MCF 10A (cell line): ENCODE measurements at regions of chr7 and their contacts with region 1.

Region 1: DNA sequence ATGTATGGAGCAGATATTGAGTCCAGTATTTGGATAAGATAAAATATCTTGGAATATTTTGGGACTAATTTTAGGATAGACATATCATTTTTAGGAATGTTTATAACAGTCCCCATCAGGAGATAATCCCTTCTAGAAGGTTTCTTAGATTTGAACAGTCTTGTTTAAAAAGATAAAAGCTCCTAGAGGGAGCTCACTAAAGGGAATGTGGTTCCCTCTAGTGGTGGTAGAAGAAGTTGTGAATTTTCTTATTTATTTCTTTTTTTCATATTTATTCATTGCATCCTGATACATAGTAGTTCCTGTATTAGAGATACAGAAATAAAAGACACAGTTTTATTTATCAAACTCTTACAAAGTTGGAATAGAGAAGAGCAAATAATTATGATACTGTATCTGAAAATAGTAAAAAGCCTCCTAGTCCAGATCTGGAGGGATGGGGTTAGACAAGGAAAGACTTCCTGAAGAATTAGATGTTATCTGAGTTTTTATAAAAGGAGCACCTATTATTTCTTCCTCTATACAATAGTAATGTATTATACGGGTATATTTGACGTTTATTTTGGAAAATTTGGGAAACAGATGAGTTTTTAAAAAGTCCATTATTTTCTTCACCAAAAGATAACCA is 24.5 kb upstream of the KLF14 start:
- DNase-seq: peak; percentile 57
- H3K4me3 Mint-ChIP-seq: no peak overlapping the region
- H3K27ac Mint-ChIP-seq: no peak overlapping the region
- H3K4me1 Mint-ChIP-seq: peaks cover 5% of the 10 kb centered on the region
- H3K27me3 Mint-ChIP-seq: peaks cover 35% of the 10 kb centered on the region
- CTCF ChIP-seq: peak; percentile 64

Region 2: DNA sequence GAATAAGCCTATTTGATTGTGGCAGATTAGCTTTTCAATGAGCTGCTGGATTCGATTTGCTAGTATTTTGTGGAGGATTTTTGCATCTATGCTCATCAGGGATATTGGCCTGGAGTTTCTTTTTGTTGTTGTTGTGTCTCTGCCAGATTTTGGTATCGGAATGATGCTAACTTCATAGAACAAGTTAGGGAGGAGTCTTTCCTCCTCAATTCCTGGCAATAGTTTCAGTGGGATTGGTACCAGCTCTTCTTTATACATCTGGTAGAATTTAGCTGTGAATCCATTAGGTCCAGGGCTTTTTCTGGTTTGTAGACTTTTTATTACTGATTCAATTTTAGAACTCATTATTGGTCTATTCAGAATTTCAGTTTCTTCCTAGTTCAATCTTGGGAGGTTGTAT is 18.9 kb after region 1 on chr7:
- CTCF ChIA-PET with region 1: interaction called, 10 read pairs
- POLR2A ChIA-PET with region 1: no interaction called
- intact Hi-C with region 1: no loop called
- DNase-seq: no peak
- H3K4me3 Mint-ChIP-seq: no peak overlapping the region
- H3K27ac Mint-ChIP-seq: no peak overlapping the region
- H3K4me1 Mint-ChIP-seq: no peaks in the 10 kb centered on the region
- H3K27me3 Mint-ChIP-seq: peaks cover 20% of the 10 kb centered on the region
- CTCF ChIP-seq: no peak